Aorta (tissue), 5 donors: ENCODE measurements at regions of chr3 and their contacts with region 1.

Region 1: GRCh38 chr3:186361762-186362536 is at the start of gene DGKG:
- DNase-seq: peak; percentile 79 to 91
- ATAC-seq: peak; percentile 88
- H3K4me3 ChIP-seq: peak within 1 kb of the TSS; percentile 36 to 49
- H3K27ac ChIP-seq: peak within 1 kb of the TSS in 1 of 2 donors; percentile 41
- H3K4me1 ChIP-seq: no peaks in the 10 kb centered on the region
- H3K27me3 ChIP-seq: no peaks in the 10 kb centered on the region
- total RNA-seq, gene DGKG: 12.8 to 37.1 TPM

Region 2: GRCh38 chr3:186079925-186080324 is 282.0 kb before region 1 on chr3:
- intact Hi-C with region 1: no loop called
- DNase-seq: no peak
- ATAC-seq: no peak
- H3K4me3 ChIP-seq: no peak overlapping the region
- H3K27ac ChIP-seq: peak overlapping the region; percentile 23 to 43
- H3K4me1 ChIP-seq: peaks cover 7 to 11% of the 10 kb centered on the region in 2 donors
- H3K27me3 ChIP-seq: no peaks in the 10 kb centered on the region

Region 3: DNA sequence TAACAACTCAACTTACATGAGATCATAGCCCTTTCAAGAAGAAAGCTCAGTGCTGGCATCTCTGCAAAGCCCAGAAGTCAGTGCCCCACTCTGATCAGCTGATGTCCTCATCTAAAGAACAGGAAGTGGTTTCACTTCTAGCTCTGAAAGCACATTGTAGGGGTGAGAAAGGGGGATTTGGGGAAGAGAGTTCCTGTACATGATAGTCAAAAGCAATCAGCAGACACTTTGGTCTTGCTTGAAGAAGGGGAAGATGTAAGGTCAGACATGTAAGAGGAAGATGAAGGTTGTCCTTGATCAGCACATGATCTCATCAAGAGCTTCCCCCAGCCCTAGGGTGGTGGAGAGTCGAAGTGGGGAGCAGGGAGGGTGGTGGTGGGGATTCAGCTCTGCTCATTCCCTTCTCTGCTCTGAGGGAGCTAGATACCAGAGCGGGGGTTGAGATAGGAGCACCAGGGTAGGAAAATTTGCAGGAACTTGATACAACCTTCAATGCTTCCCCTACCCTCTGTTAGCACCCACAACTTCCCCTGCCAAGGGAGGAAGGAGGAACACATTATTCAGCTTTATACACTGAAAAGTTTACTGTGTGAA is 176.7 kb before region 1 on chr3:
- intact Hi-C with region 1: no loop called
- DNase-seq: peak in 1 of 2 donors; percentile 62
- ATAC-seq: peak; percentile 49
- H3K4me3 ChIP-seq: no peak overlapping the region
- H3K27ac ChIP-seq: no peak overlapping the region
- H3K4me1 ChIP-seq: no peaks in the 10 kb centered on the region
- H3K27me3 ChIP-seq: no peaks in the 10 kb centered on the region

Region 4: DNA sequence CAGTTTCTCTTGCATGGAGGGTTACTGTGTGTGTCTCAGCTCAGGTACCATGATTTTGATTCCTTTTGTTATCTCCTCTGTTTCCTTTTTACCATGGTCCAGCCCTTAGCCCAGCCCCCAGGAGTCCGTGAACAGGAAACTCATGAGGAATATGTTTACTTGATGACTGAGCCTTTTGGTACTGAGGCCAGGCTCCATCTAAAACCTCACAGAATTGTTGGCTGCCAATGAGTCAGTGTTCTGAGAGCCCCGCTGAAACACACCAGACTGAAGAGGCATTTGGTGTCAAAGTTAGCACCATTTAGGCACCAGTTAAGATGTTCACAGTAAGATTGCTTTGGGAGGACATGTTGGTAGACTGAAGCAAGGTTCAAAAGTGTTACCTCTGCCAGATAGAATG is 80.8 kb before region 1 on chr3:
- intact Hi-C with region 1: loop called (anchors 5 kb)
- DNase-seq: peak in 1 of 2 donors; percentile 51
- ATAC-seq: peak; percentile 57
- H3K4me3 ChIP-seq: peak overlapping the region in 1 of 2 donors; percentile 19
- H3K27ac ChIP-seq: peak overlapping the region; percentile 58 to 67
- H3K4me1 ChIP-seq: peaks cover 3% of the 10 kb centered on the region in 2 donors
- H3K27me3 ChIP-seq: no peaks in the 10 kb centered on the region

Region 5: DNA sequence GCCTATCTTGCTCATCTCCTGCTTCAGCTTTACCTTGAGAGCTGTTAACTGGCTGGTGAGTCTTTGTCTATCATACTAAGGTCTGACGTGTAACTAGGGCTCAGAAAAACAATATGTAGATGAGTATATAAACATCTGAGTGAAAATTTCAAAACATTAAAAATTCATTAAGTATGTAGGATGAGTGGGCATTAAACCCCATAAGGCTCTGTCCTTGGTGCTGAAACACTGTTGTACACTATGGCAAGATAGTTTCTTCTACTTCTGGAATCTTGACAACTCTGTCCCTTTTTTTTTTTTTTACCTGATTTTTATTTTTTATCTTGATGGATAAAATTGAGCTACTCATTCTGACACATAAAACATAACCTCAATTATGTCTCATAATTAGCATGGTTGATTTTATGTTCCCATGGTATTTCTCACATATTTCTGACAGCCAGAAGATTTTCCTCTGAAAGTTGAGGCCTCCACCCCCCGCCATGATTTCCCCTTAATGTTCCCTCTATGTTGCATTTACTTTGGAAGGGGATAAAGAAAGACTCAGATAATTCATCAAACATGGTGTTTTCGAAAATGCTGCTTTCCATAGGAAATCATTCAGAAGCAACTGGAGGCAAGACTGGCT is 54.2 kb before region 1 on chr3:
- intact Hi-C with region 1: no loop called
- DNase-seq: no peak
- ATAC-seq: no peak
- H3K4me3 ChIP-seq: no peak overlapping the region
- H3K27ac ChIP-seq: no peak overlapping the region
- H3K4me1 ChIP-seq: no peaks in the 10 kb centered on the region
- H3K27me3 ChIP-seq: no peaks in the 10 kb centered on the region

Region 6: GRCh38 chr3:186406669-186407635 is 45.0 kb after region 1 on chr3:
- intact Hi-C with region 1: loop called (anchors 2 to 5 kb)
- DNase-seq: peak; percentile 76 to 83
- ATAC-seq: peak; percentile 85
- H3K4me3 ChIP-seq: no peak overlapping the region
- H3K27ac ChIP-seq: peak overlapping the region; percentile 83 to 97
- H3K4me1 ChIP-seq: peaks cover 0 to 6% of the 10 kb centered on the region in 2 donors
- H3K27me3 ChIP-seq: no peaks in the 10 kb centered on the region

Region 7: GRCh38 chr3:186413615-186414415 is 51.9 kb after region 1 on chr3:
- intact Hi-C with region 1: loop called in 1 of 2 experiments (anchors 5 kb)
- DNase-seq: peak in 1 of 2 donors; percentile 80
- ATAC-seq: peak; percentile 75
- H3K4me3 ChIP-seq: peak overlapping the region; percentile 10 to 50
- H3K27ac ChIP-seq: peak overlapping the region in 1 of 2 donors; percentile 9
- H3K4me1 ChIP-seq: no peaks in the 10 kb centered on the region
- H3K27me3 ChIP-seq: no peaks in the 10 kb centered on the region

Region 8: GRCh38 chr3:186493525-186494255 is 131.7 kb after region 1 on chr3:
- intact Hi-C with region 1: loop called (anchors 5 kb)
- DNase-seq: no peak
- ATAC-seq: peak; percentile 62
- H3K4me3 ChIP-seq: no peak overlapping the region
- H3K27ac ChIP-seq: peak overlapping the region in 1 of 2 donors; percentile 19
- H3K4me1 ChIP-seq: peaks cover 0 to 4% of the 10 kb centered on the region in 2 donors
- H3K27me3 ChIP-seq: no peaks in the 10 kb centered on the region